Sciatic nerve (tissue), 2 donors: ENCODE measurements at regions of chr3 and their contacts with region 1.

Region 1: GRCh38 chr3:101229681-101230080 is 90.7 kb downstream of the IMPG2 start:
- DNase-seq: no peak
- ATAC-seq: no peak

Region 2: GRCh38 chr3:101635954-101636798 is 406.5 kb after region 1 on chr3:
- intact Hi-C with region 1: loop called (anchors 5 kb)
- DNase-seq: peak; percentile 76
- ATAC-seq: peak; percentile 73

Region 3: DNA sequence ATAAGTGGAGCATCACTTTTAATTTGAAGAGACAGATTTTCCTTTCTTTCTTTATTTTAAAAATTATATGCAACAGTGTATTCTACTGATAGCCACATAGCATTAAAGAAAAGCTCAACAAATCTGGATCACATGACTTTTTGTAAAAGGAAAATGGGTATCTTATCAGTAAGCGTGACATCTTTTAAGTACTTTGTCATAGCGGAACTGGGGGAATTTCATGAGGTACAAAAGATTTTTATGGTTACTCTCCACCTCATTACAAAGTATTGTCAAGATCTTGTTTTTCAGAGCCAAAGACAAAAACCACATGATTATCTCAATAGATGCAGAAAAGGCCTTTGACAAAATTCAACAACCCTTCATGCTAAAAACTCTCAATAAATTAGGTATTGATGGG is 985.5 kb after region 1 on chr3:
- intact Hi-C with region 1: no loop called
- DNase-seq: no peak
- ATAC-seq: no peak

Region 4: DNA sequence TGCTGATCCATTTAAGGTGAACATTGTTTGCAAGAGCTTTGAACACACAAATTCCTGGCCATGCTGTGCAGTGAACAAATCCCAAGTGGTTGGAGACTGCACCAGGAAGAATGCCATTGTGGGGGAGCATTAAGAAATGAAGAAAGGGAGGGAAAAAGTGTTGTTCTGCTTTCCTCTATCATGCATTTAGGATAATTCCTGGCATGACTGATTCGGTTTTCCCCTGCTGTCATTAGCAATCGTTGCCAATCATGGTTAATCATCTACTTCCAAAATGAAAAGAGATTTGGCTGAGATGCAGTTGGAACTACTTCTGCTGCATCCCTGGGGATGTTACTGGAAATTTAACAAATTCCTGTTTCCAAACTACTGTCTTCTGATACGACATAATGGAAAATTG is 1131.4 kb after region 1 on chr3:
- intact Hi-C with region 1: no loop called
- DNase-seq: no peak
- ATAC-seq: no peak